GM12878 (cell line): ENCODE measurements at regions of chr11 and their contacts with region 1.

Region 1: GRCh38 chr11:75814686-75815344 is at the start of gene UVRAG:
- DNase-seq: peak; percentile 100
- ATAC-seq: peak; percentile 86
- H3K4me3 ChIP-seq: peak within 1 kb of the TSS; percentile 93
- H3K27ac ChIP-seq: peak within 1 kb of the TSS; percentile 94
- H3K4me1 ChIP-seq: peaks cover 39% of the 10 kb centered on the region
- H3K27me3 ChIP-seq: no peaks in the 10 kb centered on the region
- CTCF ChIP-seq: no peak
- EP300 ChIP-seq: no peak
- POLR2A ChIP-seq: peak; percentile 87
- RAD21 ChIP-seq: no peak
- polyA plus RNA-seq, gene UVRAG: 7.0 to 11.2 TPM

Region 2: DNA sequence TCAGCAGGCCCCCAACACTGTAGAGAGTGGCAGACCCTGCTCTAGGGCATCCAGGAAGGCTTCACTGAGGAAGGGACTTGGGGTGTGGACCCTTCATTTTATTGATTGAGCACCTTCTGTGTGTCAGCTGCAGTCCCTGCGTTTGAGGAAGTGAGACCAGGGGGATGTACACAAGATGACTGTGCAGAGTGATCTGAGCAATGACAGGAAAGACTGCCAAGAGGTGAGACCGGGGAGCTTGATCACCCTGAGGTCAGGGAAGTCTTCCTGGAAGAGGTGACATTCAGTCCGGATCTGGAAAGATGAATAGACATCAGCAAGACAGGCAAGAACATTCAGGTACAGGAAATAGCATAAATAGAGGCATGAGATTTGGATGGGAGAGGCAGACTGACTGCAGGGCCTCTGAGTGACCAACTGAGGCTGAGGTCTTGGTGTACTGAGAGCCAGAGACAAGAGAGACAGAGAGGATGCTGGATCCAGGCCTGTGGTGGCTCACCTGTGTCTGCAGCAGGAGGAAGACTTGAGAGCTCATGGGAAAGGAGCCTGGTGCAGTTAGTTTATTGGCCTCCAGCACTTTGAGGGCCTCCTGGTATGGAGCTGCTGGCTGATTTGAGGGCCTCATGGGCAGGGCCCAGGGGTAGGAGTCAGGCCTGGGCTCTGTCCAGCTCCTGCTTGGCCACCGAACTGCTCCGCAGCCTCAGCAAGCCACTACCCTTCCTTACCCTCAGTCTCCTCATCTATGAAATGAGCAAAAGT is 41.0 kb before region 1 on chr11:
- CTCF ChIA-PET with region 1: interaction called, 3 read pairs
- POLR2A ChIA-PET with region 1: interaction called, 13 read pairs
- RAD21 ChIA-PET with region 1: interaction called, 3 read pairs
- SMC1A ChIA-PET with region 1: interaction called, 5 read pairs
- in situ Hi-C with region 1: no loop called
- intact Hi-C with region 1: no loop called
- DNase-seq: peak; percentile 92
- ATAC-seq: peak; percentile 89
- H3K4me3 ChIP-seq: peak overlapping the region; percentile 34; the same call in 1 of the 2 replicates
- H3K27ac ChIP-seq: peak overlapping the region; percentile 94
- H3K4me1 ChIP-seq: peaks cover 39% of the 10 kb centered on the region
- H3K27me3 ChIP-seq: no peaks in the 10 kb centered on the region
- CTCF ChIP-seq: no peak
- EP300 ChIP-seq: peak; percentile 50 to 99; a peak in 2 of 4 replicates
- POLR2A ChIP-seq: 0 out of 2 replicates have a peak, but pooled peaks have one; percentile 29
- RAD21 ChIP-seq: no peak

Region 3: GRCh38 chr11:75826461-75827230 is 11.8 kb after region 1 on chr11:
- CTCF ChIA-PET with region 1: interaction called, 54 read pairs
- POLR2A ChIA-PET with region 1: interaction called, 173 read pairs
- RAD21 ChIA-PET with region 1: interaction called, 111 read pairs
- SMC1A ChIA-PET with region 1: interaction called, 100 read pairs
- in situ Hi-C with region 1: no loop called
- intact Hi-C with region 1: no loop called
- DNase-seq: no peak
- ATAC-seq: peak; percentile 11
- H3K4me3 ChIP-seq: peak overlapping the region; percentile 63; the same call in 1 of the 2 replicates
- H3K27ac ChIP-seq: peak overlapping the region; percentile 92
- H3K4me1 ChIP-seq: peaks cover 35% of the 10 kb centered on the region
- H3K27me3 ChIP-seq: no peaks in the 10 kb centered on the region
- CTCF ChIP-seq: no peak
- EP300 ChIP-seq: no peak
- POLR2A ChIP-seq: no peak
- RAD21 ChIP-seq: no peak

Region 4: GRCh38 chr11:75873417-75874221 is 58.8 kb after region 1 on chr11:
- CTCF ChIA-PET with region 1: interaction called, 183 read pairs
- POLR2A ChIA-PET with region 1: interaction called, 36 read pairs
- RAD21 ChIA-PET with region 1: interaction called, 100 read pairs
- SMC1A ChIA-PET with region 1: interaction called, 111 read pairs
- in situ Hi-C with region 1: no loop called
- intact Hi-C with region 1: loop called (anchors 1 kb)
- DNase-seq: peak; percentile 73
- ATAC-seq: peak; percentile 90
- H3K4me3 ChIP-seq: peak overlapping the region; percentile 25
- H3K27ac ChIP-seq: peak overlapping the region; percentile 84
- H3K4me1 ChIP-seq: peaks cover 26% of the 10 kb centered on the region
- H3K27me3 ChIP-seq: no peaks in the 10 kb centered on the region
- CTCF ChIP-seq: no peak
- EP300 ChIP-seq: peak; percentile 14 to 53; a peak in 2 of 4 replicates
- POLR2A ChIP-seq: no peak
- RAD21 ChIP-seq: no peak

Region 5: DNA sequence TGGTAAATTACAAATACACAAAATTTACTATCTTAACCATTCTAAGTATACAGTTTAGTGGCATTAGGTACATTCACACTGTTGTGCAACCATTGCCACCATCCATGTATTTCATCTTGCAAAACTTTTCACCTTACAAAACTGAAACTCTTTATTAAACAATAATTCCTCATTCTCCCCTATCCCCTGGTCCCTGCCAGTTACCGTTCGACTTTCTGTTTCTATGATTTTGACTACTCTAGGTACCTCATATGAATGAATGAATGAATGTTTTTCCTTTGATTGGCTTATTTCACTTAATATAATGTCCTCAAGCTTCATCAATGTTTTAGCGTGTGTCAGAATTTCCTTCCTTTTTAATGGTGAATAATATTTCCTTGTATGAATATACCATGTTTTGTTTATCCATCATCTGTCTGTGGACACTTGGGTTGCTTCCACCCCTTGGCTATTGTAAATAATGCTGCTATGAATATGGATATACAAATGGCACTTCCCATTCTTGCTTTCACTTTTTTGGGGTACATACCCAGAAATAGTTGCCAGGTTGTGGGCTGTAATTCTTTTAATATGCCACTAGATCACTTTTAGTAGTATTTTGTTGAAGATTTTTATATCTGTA is 93.2 kb after region 1 on chr11:
- CTCF ChIA-PET with region 1: no interaction called
- POLR2A ChIA-PET with region 1: no interaction called
- RAD21 ChIA-PET with region 1: no interaction called
- SMC1A ChIA-PET with region 1: no interaction called
- in situ Hi-C with region 1: no loop called
- intact Hi-C with region 1: no loop called
- DNase-seq: no peak
- ATAC-seq: peak; percentile 64
- H3K4me3 ChIP-seq: peak overlapping the region; percentile 22; the same call in 1 of the 2 replicates
- H3K27ac ChIP-seq: peak overlapping the region; percentile 45; the same call in 1 of the 2 replicates
- H3K4me1 ChIP-seq: peaks cover 28% of the 10 kb centered on the region
- H3K27me3 ChIP-seq: no peaks in the 10 kb centered on the region
- CTCF ChIP-seq: no peak
- EP300 ChIP-seq: no peak
- POLR2A ChIP-seq: no peak
- RAD21 ChIP-seq: no peak

Region 6: DNA sequence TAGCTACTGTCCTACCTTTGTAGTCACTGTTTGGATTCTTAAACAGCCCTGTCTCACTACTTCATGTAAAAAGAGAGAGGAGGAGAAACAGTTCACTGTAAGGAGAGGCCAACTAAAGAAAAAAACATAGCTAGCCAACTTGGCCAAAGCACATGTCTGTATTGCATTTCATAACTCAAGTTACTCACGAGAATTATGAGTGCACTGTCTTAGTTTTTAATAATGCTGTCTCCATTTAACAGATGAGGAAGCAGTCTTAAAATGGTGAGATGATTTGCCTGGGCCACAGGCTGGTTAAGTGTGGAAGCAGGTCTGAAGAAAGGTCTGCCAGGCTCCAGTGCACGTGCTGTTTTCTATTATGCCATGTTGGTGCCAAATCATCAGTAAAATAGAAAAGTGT is 104.7 kb after region 1 on chr11:
- CTCF ChIA-PET with region 1: no interaction called
- POLR2A ChIA-PET with region 1: no interaction called
- RAD21 ChIA-PET with region 1: no interaction called
- SMC1A ChIA-PET with region 1: no interaction called
- in situ Hi-C with region 1: no loop called
- intact Hi-C with region 1: no loop called
- DNase-seq: no peak
- ATAC-seq: peak; percentile 69
- H3K4me3 ChIP-seq: no peak overlapping the region
- H3K27ac ChIP-seq: peak overlapping the region; percentile 6; the same call in 1 of the 2 replicates
- H3K4me1 ChIP-seq: peaks cover 8% of the 10 kb centered on the region
- H3K27me3 ChIP-seq: no peaks in the 10 kb centered on the region
- CTCF ChIP-seq: no peak
- EP300 ChIP-seq: no peak
- POLR2A ChIP-seq: no peak
- RAD21 ChIP-seq: no peak